ENCODE measurements at regions of chr1 and their contacts with region 1.

Region 1: DNA sequence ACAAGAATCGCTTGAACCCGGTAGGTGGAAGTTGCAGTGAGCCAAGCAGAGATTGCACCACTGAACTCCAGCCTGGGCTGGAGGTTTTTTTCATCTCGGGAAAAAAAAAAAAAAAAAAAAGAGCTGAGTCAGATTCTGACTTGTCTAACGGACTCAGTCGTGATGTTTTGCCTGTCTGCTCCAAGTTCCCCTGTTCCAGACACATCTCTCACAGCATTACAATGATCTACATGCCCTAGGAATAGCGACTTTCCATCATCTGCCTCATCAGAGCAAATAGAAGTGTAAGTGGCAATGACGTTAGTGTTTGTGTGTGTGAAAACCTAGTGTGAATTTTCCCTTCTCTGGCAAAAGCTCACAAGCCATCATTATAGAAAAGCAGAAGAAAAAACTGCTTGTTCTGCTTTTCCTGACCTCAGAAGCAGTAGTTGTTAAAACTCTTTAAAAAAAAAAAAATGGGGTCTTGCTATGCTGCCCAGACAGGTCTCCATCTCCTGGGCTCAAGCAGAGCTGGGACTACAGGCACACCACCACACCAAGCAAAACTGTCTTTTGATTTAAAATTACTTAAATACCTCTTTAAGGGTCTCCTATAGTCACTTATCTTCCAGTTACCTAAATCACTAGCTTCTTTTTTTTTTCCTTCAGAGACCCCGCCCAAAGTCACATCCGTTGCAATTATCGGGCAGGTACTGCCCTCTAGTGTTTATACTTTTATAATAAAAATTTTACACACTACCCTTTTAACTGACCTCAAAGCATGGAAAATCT is 37.3 kb downstream of the PLEKHO1 start:
- DNase-seq: peak; percentile 86
- ATAC-seq: peak; percentile 79
- H3K4me3 ChIP-seq: peak overlapping the region in 4 of 5 experiments; percentile 18 to 54 (median 41)
- H3K4me3 Mint-ChIP-seq: peak overlapping the region; percentile 92
- H3K27ac ChIP-seq: peak overlapping the region; percentile 25 to 65
- H3K27ac Mint-ChIP-seq: peak overlapping the region; percentile 94
- H3K4me1 ChIP-seq: peaks cover 4 to 16% of the 10 kb centered on the region in 2 donors
- H3K4me1 Mint-ChIP-seq: peaks cover 16% of the 10 kb centered on the region
- H3K27me3 ChIP-seq: no peaks in the 10 kb centered on the region
- H3K27me3 Mint-ChIP-seq: no peaks in the 10 kb centered on the region
- CTCF ChIP-seq: peak; percentile 81

Region 2: DNA sequence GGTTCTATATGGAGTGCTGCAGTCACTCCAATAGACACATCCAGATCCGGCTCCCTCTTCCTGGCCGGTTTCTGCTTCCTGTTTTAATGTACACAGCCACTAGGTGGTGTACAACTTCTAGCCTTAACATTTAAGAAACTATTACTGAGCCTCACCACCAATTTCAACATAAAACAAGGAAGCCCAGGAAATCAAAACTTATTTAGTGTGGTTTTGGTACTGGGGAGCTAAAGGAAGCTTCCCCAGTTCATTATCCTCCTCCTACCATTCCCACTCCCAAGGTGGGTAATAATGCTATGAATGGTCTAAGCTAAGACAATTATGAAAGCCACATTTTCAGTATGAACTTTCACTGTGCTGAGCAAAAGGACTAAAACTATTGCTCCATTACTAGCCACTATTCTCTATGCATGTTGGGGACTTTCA is 224.8 kb before region 1 on chr1:
- CTCF ChIA-PET with region 1: interaction called, 91 read pairs
- POLR2A ChIA-PET with region 1: no interaction called
- intact Hi-C with region 1: no loop called
- DNase-seq: peak; percentile 81
- ATAC-seq: peak; percentile 69
- H3K4me3 ChIP-seq: no peak overlapping the region
- H3K4me3 Mint-ChIP-seq: no peak overlapping the region
- H3K27ac ChIP-seq: no peak overlapping the region
- H3K27ac Mint-ChIP-seq: no peak overlapping the region
- H3K4me1 ChIP-seq: peaks cover 7% of the 10 kb centered on the region in 2 donors
- H3K4me1 Mint-ChIP-seq: peaks cover 4% of the 10 kb centered on the region
- H3K27me3 ChIP-seq: peaks cover 0 to 4% (median 0%) of the 10 kb centered on the region in 4 experiments
- H3K27me3 Mint-ChIP-seq: peaks cover 9% of the 10 kb centered on the region
- CTCF ChIP-seq: peak; percentile 90

Region 3: DNA sequence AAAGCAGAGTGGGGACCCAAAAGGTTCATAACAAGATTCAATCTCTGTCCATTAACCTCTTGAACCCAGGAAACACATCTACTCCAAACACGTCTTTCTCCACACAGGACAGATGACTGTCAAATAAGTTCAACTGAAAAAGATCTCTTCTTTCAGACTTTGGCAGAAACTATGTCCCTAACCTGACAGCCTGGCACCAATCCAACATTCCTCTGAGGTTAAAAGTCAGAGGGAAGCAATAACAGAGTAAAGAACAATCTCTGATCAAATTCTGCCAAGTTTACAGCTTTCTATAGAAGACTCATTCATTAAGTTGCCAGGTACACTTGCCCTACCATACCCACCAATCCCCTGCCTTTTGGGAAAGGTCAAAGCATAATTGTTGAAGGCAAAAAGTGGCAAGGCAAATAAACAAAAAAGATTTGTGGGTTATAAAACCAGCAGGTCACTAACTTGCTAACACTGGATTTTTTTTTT is 208.4 kb before region 1 on chr1:
- CTCF ChIA-PET with region 1: no interaction called
- POLR2A ChIA-PET with region 1: no interaction called
- intact Hi-C with region 1: no loop called
- DNase-seq: no peak
- ATAC-seq: no peak
- H3K4me3 ChIP-seq: no peak overlapping the region
- H3K4me3 Mint-ChIP-seq: no peak overlapping the region
- H3K27ac ChIP-seq: no peak overlapping the region
- H3K27ac Mint-ChIP-seq: no peak overlapping the region
- H3K4me1 ChIP-seq: no peaks in the 10 kb centered on the region
- H3K4me1 Mint-ChIP-seq: peaks cover 5% of the 10 kb centered on the region
- H3K27me3 ChIP-seq: no peaks in the 10 kb centered on the region
- H3K27me3 Mint-ChIP-seq: peaks cover 17% of the 10 kb centered on the region
- CTCF ChIP-seq: no peak

Region 4: GRCh38 chr1:150067184-150068036 is 119.6 kb before region 1 on chr1 and contains the start of gene VPS45:
- CTCF ChIA-PET with region 1: interaction called, 263 read pairs
- POLR2A ChIA-PET with region 1: interaction called, 11 read pairs
- intact Hi-C with region 1: loop called (anchors 1 kb)
- DNase-seq: peak; percentile 88
- ATAC-seq: peak; percentile 88
- H3K4me3 ChIP-seq: peak within 1 kb of the TSS; percentile 61 to 92 (median 79)
- H3K4me3 Mint-ChIP-seq: peak within 1 kb of the TSS; percentile 98
- H3K27ac ChIP-seq: peak within 1 kb of the TSS; percentile 74 to 85
- H3K27ac Mint-ChIP-seq: peak within 1 kb of the TSS; percentile 97
- H3K4me1 ChIP-seq: peaks cover 0 to 15% of the 10 kb centered on the region in 2 donors
- H3K4me1 Mint-ChIP-seq: peaks cover 32% of the 10 kb centered on the region
- H3K27me3 ChIP-seq: no peaks in the 10 kb centered on the region
- H3K27me3 Mint-ChIP-seq: no peaks in the 10 kb centered on the region
- CTCF ChIP-seq: no peak
- total RNA-seq, gene VPS45: 49.1 and 50.0 TPM in 2 replicates

Region 5: DNA sequence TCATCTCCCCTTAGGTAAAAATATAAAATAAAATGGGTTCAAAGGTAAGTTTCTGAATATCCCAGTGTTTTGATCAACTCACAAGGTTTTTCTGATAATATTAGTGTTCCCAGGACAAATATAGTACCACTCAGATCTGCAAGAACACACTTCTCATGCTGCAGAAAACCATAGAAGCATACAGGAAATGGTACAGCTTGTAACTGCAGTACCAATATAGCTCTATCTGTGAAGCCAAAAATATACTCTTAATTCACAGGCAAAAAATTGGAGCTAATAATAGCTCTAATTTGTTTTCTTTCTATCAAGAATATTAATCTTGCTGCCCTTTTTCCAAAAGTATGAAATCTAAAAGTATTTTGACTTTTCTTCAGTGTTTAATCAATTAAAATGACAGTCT is 106.2 kb before region 1 on chr1:
- CTCF ChIA-PET with region 1: interaction called, 263 read pairs
- POLR2A ChIA-PET with region 1: no interaction called
- intact Hi-C with region 1: no loop called
- DNase-seq: no peak
- ATAC-seq: no peak
- H3K4me3 ChIP-seq: peak overlapping the region in 1 of 5 experiments; percentile 8
- H3K4me3 Mint-ChIP-seq: no peak overlapping the region
- H3K27ac ChIP-seq: peak overlapping the region in 1 of 2 donors; percentile 67
- H3K27ac Mint-ChIP-seq: no peak overlapping the region
- H3K4me1 ChIP-seq: peaks cover 7 to 23% of the 10 kb centered on the region in 2 donors
- H3K4me1 Mint-ChIP-seq: peaks cover 33% of the 10 kb centered on the region
- H3K27me3 ChIP-seq: no peaks in the 10 kb centered on the region
- H3K27me3 Mint-ChIP-seq: no peaks in the 10 kb centered on the region
- CTCF ChIP-seq: no peak

Region 6: GRCh38 chr1:150162862-150163706 is 23.9 kb before region 1 on chr1:
- CTCF ChIA-PET with region 1: interaction called, 100 read pairs
- POLR2A ChIA-PET with region 1: interaction called, 9 read pairs
- intact Hi-C with region 1: loop called (anchors 1 kb)
- DNase-seq: peak; percentile 73
- ATAC-seq: peak; percentile 10
- H3K4me3 ChIP-seq: peak overlapping the region; percentile 5 to 70 (median 28)
- H3K4me3 Mint-ChIP-seq: peak overlapping the region; percentile 93
- H3K27ac ChIP-seq: peak overlapping the region; percentile 95
- H3K27ac Mint-ChIP-seq: peak overlapping the region; percentile 99
- H3K4me1 ChIP-seq: peaks cover 78 to 88% of the 10 kb centered on the region in 2 donors
- H3K4me1 Mint-ChIP-seq: peaks cover 85% of the 10 kb centered on the region
- H3K27me3 ChIP-seq: no peaks in the 10 kb centered on the region
- H3K27me3 Mint-ChIP-seq: no peaks in the 10 kb centered on the region
- CTCF ChIP-seq: no peak

Region 7: GRCh38 chr1:150176593-150176992 is 10.4 kb before region 1 on chr1:
- CTCF ChIA-PET with region 1: interaction called, 52 read pairs
- POLR2A ChIA-PET with region 1: interaction called, 15 read pairs
- intact Hi-C with region 1: no loop called
- DNase-seq: no peak
- ATAC-seq: no peak
- H3K4me3 ChIP-seq: no peak overlapping the region
- H3K4me3 Mint-ChIP-seq: no peak overlapping the region
- H3K27ac ChIP-seq: no peak overlapping the region
- H3K27ac Mint-ChIP-seq: no peak overlapping the region
- H3K4me1 ChIP-seq: no peaks in the 10 kb centered on the region
- H3K4me1 Mint-ChIP-seq: no peaks in the 10 kb centered on the region
- H3K27me3 ChIP-seq: no peaks in the 10 kb centered on the region
- H3K27me3 Mint-ChIP-seq: no peaks in the 10 kb centered on the region
- CTCF ChIP-seq: no peak

Region 8: DNA sequence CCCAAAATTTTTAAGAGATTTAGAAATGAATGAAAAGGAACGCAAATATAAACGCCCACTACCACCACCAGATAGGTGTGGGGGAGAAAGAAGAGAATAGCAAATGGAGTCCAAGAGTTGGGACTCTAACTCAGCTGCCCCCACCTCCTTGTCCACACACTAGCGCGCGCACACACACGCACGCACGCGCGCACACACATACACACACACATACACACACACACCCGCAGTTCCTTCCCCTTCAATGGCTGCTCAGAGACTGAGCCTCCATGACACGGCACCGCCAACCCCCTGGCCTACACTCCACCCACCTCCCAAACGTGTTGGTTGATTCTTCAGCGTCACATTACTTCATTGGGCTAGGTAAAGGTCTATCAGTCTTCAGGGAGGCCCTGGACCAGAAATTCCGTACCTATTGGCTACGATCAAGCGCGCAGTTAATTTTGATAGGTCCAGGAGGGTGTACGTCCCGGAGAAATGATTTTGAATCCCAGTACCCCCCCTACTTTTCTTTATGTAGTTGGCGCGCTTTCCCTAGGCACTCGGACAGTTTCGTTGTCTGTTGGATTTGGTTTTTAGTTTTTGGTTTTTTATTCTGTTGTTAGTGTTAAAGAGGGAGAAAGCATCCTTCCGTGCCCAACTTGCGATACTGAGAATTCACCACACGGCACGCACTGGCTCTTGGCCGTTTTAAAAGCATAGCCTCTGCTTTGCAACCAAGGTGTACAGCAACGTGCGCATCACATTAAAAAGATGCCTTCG is 49.1 kb after region 1 on chr1 and contains the start of gene ANP32E:
- CTCF ChIA-PET with region 1: interaction called, 8 read pairs
- POLR2A ChIA-PET with region 1: interaction called, 5 read pairs
- intact Hi-C with region 1: loop called (anchors 1 kb)
- DNase-seq: peak; percentile 98
- ATAC-seq: peak; percentile 89
- H3K4me3 ChIP-seq: peak within 1 kb of the TSS; percentile 83 to 98 (median 86)
- H3K4me3 Mint-ChIP-seq: no peak within 1 kb of the TSS
- H3K27ac ChIP-seq: peak within 1 kb of the TSS; percentile 97 to 98
- H3K27ac Mint-ChIP-seq: no peak within 1 kb of the TSS
- H3K4me1 ChIP-seq: peaks cover 23% of the 10 kb centered on the region in 2 donors
- H3K4me1 Mint-ChIP-seq: peaks cover 16% of the 10 kb centered on the region
- H3K27me3 ChIP-seq: no peaks in the 10 kb centered on the region
- H3K27me3 Mint-ChIP-seq: no peaks in the 10 kb centered on the region
- CTCF ChIP-seq: no peak
- total RNA-seq, gene ANP32E: 42.4 and 47.1 TPM in 2 replicates

Region 9: DNA sequence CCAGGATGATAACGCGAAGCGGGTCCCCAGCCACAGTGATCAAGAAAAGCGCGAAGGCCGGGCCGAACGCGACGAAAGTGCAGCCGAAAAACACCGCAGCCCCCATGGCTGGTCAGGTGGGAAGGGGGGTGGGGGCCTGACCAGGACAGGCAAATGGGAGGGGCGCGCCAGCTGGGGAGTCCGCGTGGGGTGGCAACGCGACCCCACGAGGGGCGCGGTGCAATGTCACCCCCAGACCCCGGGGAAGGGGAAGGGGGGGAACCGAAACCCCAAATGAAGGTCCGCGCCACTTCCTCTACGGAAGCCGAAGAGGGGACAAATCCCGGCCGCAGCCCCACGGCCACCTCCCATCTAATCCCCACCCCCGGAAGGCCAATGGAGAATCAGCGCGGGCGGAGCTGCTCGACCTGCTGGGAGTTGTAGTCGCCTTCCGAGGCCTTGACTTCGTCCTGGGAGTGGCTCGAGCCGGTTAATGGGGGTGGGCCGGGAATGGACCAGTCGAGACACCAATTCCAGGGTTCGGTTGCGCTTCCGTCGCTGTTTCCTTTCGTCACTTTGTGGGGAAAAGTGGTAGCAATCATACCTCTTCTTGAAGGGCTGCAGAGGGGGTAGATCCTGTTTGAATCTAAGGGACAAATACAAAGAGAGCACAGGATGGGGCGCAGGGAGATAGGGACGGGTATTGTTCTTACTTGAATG is 81.9 kb after region 1 on chr1 and contains the start of gene APH1A:
- CTCF ChIA-PET with region 1: no interaction called
- POLR2A ChIA-PET with region 1: no interaction called
- intact Hi-C with region 1: no loop called
- DNase-seq: peak; percentile 96
- ATAC-seq: peak; percentile 98
- H3K4me3 ChIP-seq: peak within 1 kb of the TSS; percentile 62 to 98 (median 95)
- H3K4me3 Mint-ChIP-seq: peak within 1 kb of the TSS; percentile 97
- H3K27ac ChIP-seq: peak within 1 kb of the TSS; percentile 94 to 95
- H3K27ac Mint-ChIP-seq: peak within 1 kb of the TSS; percentile 98
- H3K4me1 ChIP-seq: peaks cover 19 to 27% of the 10 kb centered on the region in 2 donors
- H3K4me1 Mint-ChIP-seq: peaks cover 30% of the 10 kb centered on the region
- H3K27me3 ChIP-seq: no peaks in the 10 kb centered on the region
- H3K27me3 Mint-ChIP-seq: peaks cover 6% of the 10 kb centered on the region
- CTCF ChIP-seq: no peak
- total RNA-seq, gene APH1A: 134 and 135 TPM in 2 replicates

Region 10: GRCh38 chr1:150456146-150456647 is 269.2 kb after region 1 on chr1:
- CTCF ChIA-PET with region 1: no interaction called
- POLR2A ChIA-PET with region 1: no interaction called
- intact Hi-C with region 1: no loop called
- DNase-seq: no peak
- ATAC-seq: no peak
- H3K4me3 ChIP-seq: no peak overlapping the region
- H3K4me3 Mint-ChIP-seq: no peak overlapping the region
- H3K27ac ChIP-seq: no peak overlapping the region
- H3K27ac Mint-ChIP-seq: no peak overlapping the region
- H3K4me1 ChIP-seq: no peaks in the 10 kb centered on the region
- H3K4me1 Mint-ChIP-seq: no peaks in the 10 kb centered on the region
- H3K27me3 ChIP-seq: no peaks in the 10 kb centered on the region
- H3K27me3 Mint-ChIP-seq: no peaks in the 10 kb centered on the region
- CTCF ChIP-seq: no peak